ENCODE measurements at regions of chr7 and their contacts with region 1.

Region 1: DNA sequence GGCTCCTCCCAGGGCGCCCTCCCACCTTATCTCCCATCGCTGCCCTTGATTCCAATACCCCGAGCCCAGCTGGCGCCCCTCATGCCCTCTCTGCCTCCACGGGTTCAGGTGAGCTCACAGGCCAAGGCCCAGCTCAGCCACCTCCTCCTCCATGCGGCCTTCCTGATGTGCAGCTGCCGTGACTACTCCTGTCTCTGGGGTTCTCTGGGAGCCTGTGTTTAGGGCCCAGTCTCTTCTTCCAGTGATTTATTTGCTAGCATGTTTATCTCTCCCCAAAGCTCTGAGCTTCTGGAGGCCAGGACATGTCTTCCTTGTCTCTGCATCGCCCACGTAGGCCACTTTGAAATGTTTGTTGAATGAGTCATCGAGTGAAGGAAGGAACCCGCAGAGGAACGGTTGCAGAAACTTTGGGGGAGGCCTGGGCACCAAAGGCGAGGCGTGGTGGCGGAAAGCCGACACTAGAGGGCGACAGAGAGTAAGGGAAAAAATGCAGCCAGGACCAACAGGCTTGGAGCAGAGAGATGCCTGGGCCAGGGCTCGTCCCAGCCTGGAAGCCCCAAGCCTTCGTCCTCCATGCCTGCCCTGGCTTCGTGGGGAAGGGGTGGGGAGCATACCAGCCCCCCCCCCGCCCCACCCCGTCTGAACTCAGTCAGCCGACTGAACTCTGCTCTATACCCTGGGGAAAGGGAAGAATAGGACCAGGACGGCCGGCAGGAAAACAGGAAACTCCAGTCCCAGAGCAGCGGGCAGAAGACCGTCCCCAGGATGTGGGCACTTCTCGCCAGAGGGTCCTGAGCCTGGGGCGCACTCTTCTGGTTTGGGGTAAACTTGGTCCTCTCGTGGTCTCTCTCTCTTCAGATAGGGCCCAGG is 10.9 kb upstream of the HSPB1 start:
- DNase-seq: peak; percentile 95

Region 2: GRCh38 chr7:76206633-76207032 is 84.9 kb before region 1 on chr7:
- intact Hi-C with region 1: no loop called
- DNase-seq: no peak

Region 3: GRCh38 chr7:76302347-76303201 is 11.0 kb after region 1 on chr7 and contains the start of gene HSPB1:
- intact Hi-C with region 1: loop called (anchors 1 kb)
- DNase-seq: peak; percentile 96
- total RNA-seq, gene HSPB1: 2,571 TPM

Region 4: DNA sequence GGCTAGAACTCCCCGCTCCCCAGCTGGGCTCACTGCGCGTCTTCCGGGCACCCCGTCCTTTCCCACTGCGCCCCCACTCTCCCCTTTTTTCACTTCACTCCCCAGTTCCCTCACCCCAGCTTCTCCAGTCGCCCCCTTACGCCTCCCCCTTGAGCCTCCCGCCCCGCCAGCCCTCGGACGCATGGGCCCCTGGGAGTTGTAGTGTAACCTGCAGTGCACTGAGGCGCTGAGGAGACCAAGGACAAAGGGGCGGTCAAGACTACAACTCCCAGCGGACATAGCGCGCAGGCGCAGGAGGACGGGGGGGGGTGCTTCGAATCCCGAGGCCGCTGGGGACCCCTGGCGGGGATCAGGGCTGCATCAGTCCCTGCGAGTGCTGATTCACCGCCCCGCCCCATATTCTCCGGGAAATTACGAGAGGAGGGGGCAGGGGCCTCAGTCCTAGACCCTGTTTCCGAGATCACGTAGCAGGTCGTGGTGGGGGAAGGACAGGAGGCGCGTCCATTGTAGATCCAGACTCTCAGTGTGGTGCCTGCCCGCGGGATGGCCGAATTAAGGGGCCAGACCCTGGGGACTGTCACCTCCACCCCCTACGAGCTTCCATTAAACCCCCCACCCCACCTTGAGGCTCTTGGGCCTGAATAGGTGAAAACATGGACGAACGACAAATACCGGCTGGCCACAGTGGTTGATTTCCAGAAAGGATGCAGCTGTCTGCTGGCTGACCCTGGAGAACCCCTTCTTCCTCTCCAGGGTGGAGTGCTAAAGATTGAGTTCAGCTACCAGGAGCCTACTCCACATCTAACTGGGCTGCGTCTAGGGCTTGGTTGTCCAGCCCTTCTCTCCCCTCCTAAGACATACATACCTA is 67.8 kb after region 1 on chr7:
- intact Hi-C with region 1: loop called (anchors 2 kb)
- DNase-seq: peak; percentile 99